Calu3 (cell line): ENCODE measurements at regions of chr2 and their contacts with region 1.

Region 1: GRCh38 chr2:189440947-189441708 is at the start of gene WDR75:
- DNase-seq: peak; percentile 91
- H3K4me3 Mint-ChIP-seq: no peak within 1 kb of the TSS
- H3K27ac Mint-ChIP-seq: peak within 1 kb of the TSS; percentile 97
- H3K4me1 Mint-ChIP-seq: no peaks in the 10 kb centered on the region
- H3K27me3 Mint-ChIP-seq: no peaks in the 10 kb centered on the region
- CTCF ChIP-seq: no peak
- total RNA-seq, gene WDR75: 53.8 and 57.7 TPM in 2 replicates

Region 2: DNA sequence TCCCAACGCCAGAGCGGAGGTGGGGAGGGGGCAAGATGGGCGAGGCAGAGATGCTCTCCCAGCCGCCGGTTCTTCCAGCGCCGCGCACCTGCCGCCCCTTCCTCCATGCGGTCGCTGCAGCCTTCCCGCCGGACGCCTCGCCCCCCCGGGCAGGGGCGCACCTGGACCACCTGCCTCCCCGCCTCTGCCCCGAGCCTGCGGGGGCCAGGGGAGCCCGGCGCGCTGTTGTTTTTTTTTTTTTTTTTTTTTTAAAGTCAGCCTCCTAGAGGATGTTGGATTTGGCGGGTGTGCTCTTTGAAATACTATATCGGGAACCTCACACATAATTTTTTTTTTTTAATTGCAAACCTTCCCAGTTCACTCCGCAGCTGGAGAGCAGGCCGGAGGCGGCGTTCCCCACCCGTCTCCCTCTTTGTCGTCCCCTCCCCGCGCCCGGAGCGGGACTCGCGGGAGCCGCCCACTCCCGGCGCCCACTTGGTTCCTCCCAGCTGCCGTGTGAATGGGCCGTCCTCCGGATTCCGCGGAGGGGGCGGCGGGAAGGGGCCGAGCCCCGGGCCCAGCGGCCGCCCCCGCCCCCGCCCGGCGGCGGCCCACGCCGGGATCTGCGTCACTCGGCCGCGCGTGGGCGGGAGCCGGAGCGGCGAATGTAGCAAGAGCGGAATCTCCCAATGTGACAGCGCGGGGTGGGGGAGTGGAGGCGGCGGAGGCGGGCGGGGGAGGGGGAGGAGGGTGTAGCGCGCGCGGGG is 1207.3 kb after region 1 on chr2:
- CTCF ChIA-PET with region 1: interaction called, 10 read pairs
- intact Hi-C with region 1: no loop called
- DNase-seq: peak; percentile 84
- H3K4me3 Mint-ChIP-seq: peak overlapping the region; percentile 88
- H3K27ac Mint-ChIP-seq: peak overlapping the region; percentile 78
- H3K4me1 Mint-ChIP-seq: no peaks in the 10 kb centered on the region
- H3K27me3 Mint-ChIP-seq: no peaks in the 10 kb centered on the region
- CTCF ChIP-seq: no peak